Breast epithelium (tissue), 4 donors: ENCODE measurements at regions of chr20 and their contacts with region 1.

Region 1: DNA sequence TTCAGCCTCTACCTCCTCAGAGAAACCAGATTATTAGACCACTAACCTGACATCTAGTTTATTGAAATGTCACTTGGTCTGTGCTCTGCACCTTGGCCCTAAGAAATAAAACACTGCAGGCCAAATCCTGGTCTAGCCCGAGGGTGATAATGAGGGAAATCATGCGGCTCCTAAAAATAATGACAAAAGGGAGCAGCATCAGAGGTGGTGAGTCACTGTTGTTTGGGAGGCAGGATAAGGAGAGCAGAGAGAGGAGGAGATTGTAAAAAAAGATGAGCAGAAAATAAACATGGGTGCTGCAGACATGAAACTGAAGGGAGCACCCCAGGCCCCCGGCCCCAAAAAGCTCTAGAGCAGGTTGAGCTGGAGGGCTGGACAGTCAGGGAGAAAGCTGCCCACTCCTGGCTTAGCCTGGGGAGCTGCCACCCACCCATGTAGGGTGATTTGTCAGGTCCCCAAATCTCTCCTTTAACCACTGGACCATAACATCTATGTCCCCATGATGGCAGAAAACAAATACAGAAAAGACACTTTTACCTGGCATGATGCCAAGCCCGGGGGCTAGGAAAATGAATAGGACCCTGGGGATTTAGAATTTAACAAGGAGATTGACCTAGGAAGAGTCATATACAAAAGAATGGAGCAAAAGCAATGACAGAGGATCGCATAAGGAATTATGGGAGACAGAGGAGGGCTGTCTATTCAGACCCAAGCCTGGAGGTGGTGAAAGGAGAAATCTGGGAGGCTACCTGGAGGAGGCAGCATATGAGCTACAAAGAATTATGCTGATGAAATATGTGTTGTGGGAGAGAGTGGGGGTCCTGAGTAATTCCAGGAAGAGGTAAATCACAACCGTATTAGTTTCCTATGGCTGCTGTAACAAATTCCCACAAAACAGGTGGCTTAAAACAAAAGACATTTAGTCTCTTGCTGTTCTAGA is 103.7 kb downstream of the SNAP25 start:
- DNase-seq: no peak
- H3K4me3 ChIP-seq: no peak overlapping the region
- H3K27ac ChIP-seq: no peak overlapping the region
- H3K4me1 ChIP-seq: no peaks in the 10 kb centered on the region
- H3K27me3 ChIP-seq: no peaks in the 10 kb centered on the region
- CTCF ChIP-seq: no peak
- POLR2A ChIP-seq: no peak

Region 2: GRCh38 chr20:9955646-9956045 is 366.7 kb before region 1 on chr20:
- intact Hi-C with region 1: no loop called
- DNase-seq: no peak
- H3K4me3 ChIP-seq: no peak overlapping the region
- H3K27ac ChIP-seq: no peak overlapping the region
- H3K4me1 ChIP-seq: no peaks in the 10 kb centered on the region
- H3K27me3 ChIP-seq: no peaks in the 10 kb centered on the region
- CTCF ChIP-seq: no peak
- POLR2A ChIP-seq: no peak

Region 3: GRCh38 chr20:10297684-10298240 is 24.6 kb before region 1 on chr20:
- intact Hi-C with region 1: no loop called
- DNase-seq: no peak
- H3K4me3 ChIP-seq: no peak overlapping the region
- H3K27ac ChIP-seq: no peak overlapping the region
- H3K4me1 ChIP-seq: no peaks in the 10 kb centered on the region
- H3K27me3 ChIP-seq: no peaks in the 10 kb centered on the region
- CTCF ChIP-seq: no peak
- POLR2A ChIP-seq: no peak

Region 4: GRCh38 chr20:10603971-10604864 is 281.9 kb after region 1 on chr20:
- intact Hi-C with region 1: loop called (anchors 5 kb)
- DNase-seq: peak in 1 of 2 donors; percentile 60
- H3K4me3 ChIP-seq: peak overlapping the region in 1 of 3 donors; percentile 26
- H3K27ac ChIP-seq: peak overlapping the region; percentile 40 to 80
- H3K4me1 ChIP-seq: no peaks in the 10 kb centered on the region
- H3K27me3 ChIP-seq: no peaks in the 10 kb centered on the region
- CTCF ChIP-seq: no peak
- POLR2A ChIP-seq: no peak